ENCODE measurements at regions of chr1 and their contacts with region 1.

Region 1: DNA sequence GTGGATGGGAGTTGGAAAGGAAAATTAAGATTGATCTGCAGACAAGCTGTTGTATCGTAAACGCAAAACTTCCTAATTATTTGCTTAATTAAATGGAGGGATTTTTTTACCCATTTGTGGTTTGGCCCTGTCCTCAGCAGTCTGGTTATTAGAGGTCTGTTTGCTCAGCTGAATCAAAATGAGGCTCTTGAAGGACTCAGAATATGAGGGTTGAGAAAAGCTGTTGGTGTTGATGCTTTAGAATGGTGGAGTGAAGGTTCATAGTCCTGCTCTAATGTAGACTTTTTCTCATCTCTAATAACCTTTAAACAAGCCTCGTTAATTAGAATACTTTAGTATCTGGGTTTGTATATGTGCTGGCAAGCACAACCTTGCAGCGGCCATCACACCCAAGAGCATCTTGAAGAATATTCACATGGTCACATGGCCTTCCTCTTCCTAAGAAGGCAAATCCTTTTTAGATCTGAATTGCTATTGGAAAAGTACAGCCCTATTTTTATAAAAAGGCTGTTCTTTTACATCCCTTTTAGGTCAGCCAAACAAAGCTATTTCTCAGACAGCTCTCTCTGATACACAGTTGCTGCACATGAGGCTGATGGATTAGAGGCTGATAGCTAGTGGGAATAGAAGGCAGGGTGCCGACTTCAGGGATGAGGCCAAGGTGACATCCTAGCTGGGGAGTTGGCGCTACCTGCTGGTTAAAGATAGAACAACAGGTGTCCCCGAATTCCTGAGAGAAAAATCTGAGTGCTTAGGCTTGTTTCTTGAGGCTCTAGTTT is 53.8 kb downstream of the MACF1 start:
- DNase-seq: peak; percentile 59
- ATAC-seq: peak; percentile 86

Region 2: GRCh38 chr1:38789498-38790169 is 468.7 kb before region 1 on chr1:
- intact Hi-C with region 1: no loop called
- DNase-seq: no peak
- ATAC-seq: no peak

Region 3: GRCh38 chr1:39196244-39197215 is 61.8 kb before region 1 on chr1:
- intact Hi-C with region 1: loop called (anchors 5 kb)
- DNase-seq: no peak
- ATAC-seq: no peak

Measured in Right ventricle myocardium superior (tissue), 1 donor.